ENCODE measurements at regions of chr6 and their contacts with region 1.

Region 1: DNA sequence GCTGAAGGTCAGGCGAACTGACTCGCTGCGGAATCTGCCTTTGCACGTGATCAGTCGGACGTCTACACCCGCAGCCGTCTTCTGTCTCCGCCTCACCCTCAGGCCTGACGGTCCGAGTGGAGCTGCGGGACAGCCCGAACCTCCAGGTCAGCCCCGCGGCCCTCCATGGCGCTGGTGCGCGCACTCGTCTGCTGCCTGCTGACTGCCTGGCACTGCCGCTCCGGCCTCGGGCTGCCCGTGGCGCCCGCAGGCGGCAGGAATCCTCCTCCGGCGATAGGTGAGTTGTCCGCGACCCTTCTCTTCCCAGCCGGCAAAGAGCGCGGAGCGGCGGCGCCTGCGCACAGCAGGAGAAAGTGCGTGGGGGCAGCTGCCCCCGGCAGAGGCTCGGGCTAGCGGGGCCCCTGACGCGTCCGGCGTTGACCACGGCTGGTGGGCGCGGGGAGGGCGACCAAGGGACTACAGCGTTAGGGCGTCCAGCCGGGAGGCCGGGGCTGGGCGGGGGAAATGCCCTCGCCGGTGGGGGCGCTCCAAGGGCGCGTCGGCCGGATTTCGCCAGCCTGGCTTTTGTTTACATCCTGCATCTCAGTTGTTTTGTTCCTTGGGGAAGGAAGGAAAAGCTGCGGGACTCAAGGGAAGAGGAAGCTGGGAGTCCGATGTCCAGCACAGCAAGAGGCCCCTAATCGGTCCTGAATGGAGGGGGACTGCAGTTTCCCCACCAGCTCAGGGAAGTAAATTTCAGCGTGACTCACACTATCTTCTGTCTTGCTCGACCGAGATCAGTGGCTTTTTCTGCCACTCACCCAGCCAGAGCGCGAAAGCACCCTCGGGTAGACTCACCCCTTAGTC is at the start of gene SMPDL3A:
- DNase-seq: peak; percentile 74
- H3K4me3 Mint-ChIP-seq: peak within 1 kb of the TSS; percentile 91
- H3K27ac Mint-ChIP-seq: peak within 1 kb of the TSS; percentile 84
- H3K4me1 Mint-ChIP-seq: peaks cover 19% of the 10 kb centered on the region
- H3K27me3 Mint-ChIP-seq: peaks cover 64% of the 10 kb centered on the region
- total RNA-seq, gene SMPDL3A: 0.28 and 0.42 TPM in 2 replicates

Region 2: GRCh38 chr6:122751326-122751725 is 38.1 kb before region 1 on chr6:
- intact Hi-C with region 1: loop called (anchors 2 kb)
- DNase-seq: peak; percentile 67
- H3K4me3 Mint-ChIP-seq: peak overlapping the region; percentile 35
- H3K27ac Mint-ChIP-seq: peak overlapping the region; percentile 76
- H3K4me1 Mint-ChIP-seq: peaks cover 29% of the 10 kb centered on the region
- H3K27me3 Mint-ChIP-seq: no peaks in the 10 kb centered on the region

Region 3: DNA sequence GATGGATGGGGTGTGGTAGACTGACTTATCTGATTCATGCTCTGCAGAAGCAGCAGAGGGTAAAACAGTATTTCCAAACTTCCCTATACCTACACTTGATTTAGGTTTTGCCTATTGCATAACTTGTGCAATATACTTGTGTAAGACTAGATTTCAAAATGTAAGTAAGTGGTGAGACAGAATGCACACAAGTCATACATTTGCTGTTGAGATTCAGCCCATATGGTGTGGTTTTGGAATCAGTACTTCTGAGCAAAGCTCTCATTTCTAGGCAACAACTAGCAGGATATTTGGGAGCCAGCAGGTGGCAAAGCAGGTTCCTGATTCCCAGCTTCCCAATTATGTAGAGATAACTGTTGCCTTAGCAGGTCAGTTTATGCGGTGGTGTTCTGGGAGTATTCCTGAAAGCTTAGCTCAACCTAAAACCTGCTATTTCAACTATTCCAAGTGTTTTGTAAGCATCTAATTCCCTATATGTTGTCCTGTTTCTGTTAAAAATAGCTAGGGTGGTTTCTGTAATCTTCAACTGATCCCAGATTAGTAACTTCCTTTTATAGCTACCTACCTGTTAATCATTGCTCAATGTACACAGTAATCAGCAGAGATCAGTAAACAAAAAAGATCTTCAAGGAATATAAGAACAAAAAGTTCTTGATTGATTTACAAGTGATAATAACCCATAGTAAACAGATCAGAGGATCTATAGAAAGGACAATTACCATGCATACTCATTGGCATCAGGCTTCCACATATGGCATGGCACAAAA is 18.4 kb before region 1 on chr6:
- intact Hi-C with region 1: no loop called
- DNase-seq: no peak
- H3K4me3 Mint-ChIP-seq: no peak overlapping the region
- H3K27ac Mint-ChIP-seq: no peak overlapping the region
- H3K4me1 Mint-ChIP-seq: no peaks in the 10 kb centered on the region
- H3K27me3 Mint-ChIP-seq: peaks cover 26% of the 10 kb centered on the region

Region 4: DNA sequence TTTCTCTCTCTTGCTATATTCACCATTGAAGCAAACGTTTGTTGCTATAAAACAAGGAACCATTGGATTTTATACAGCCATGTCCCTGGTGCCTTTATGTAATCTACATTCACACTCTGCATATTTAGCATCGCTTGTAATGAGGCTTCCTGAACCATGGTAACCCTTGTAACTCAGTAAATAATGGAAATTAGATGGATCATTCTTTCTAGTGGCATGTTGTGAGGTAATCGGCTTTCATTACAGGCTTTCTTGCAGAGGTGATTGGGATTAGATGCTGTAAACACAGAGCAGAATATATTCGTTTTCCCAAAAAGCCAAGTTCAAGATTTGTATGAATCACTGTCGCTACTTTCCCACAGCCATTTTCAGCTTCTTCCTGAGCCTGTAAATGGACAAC is 35.8 kb after region 1 on chr6:
- intact Hi-C with region 1: no loop called
- DNase-seq: no peak
- H3K4me3 Mint-ChIP-seq: no peak overlapping the region
- H3K27ac Mint-ChIP-seq: no peak overlapping the region
- H3K4me1 Mint-ChIP-seq: no peaks in the 10 kb centered on the region
- H3K27me3 Mint-ChIP-seq: peaks cover 4% of the 10 kb centered on the region

Measured in activated CD4-positive, alpha-beta T cell treated with anti-CD3 and anti-CD28 coated beads, Interleukin-2, amount 10 ng/mL, durations not matched to agents 24 days and 14 days (primary cell).